ENCODE measurements at regions of chr4 and their contacts with region 1.

Region 1: GRCh38 chr4:74146581-74147129 is 11.3 kb upstream of the MTHFD2L start:
- DNase-seq: no peak
- ATAC-seq: no peak
- H3K4me3 ChIP-seq: no peak overlapping the region
- H3K27ac ChIP-seq: no peak overlapping the region
- H3K4me1 ChIP-seq: no peaks in the 10 kb centered on the region
- H3K27me3 ChIP-seq: no peaks in the 10 kb centered on the region
- CTCF ChIP-seq: no peak
- POLR2A ChIP-seq: no peak
- RAD21 ChIP-seq: no peak

Region 2: DNA sequence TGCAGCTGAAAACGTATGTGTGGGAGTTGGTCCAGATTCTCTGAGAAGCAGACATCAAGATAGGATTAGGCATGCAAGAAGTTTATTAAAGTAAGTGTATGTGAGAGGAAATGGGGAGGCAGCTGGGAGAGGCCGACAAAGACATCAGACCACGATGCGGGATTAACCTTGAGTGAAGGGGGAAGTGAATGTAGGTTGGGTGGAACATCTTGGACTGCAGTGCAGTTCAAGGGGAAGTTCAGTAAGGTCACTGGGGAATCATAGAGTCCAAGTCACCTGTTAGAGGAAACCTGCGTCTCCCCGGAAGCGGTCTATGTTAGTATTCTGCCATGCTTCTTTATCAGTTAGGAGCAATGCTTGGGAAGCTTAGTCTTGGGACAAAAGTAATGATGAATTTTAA is 384.2 kb before region 1 on chr4:
- CTCF ChIA-PET with region 1: no interaction called
- POLR2A ChIA-PET with region 1: no interaction called
- RAD21 ChIA-PET with region 1: no interaction called
- intact Hi-C with region 1: no loop called
- DNase-seq: no peak
- ATAC-seq: no peak
- H3K4me3 ChIP-seq: no peak overlapping the region
- H3K27ac ChIP-seq: no peak overlapping the region
- H3K4me1 ChIP-seq: no peaks in the 10 kb centered on the region
- H3K27me3 ChIP-seq: no peaks in the 10 kb centered on the region
- CTCF ChIP-seq: no peak
- POLR2A ChIP-seq: no peak
- RAD21 ChIP-seq: no peak

Region 3: GRCh38 chr4:74123065-74123728 is 23.5 kb before region 1 on chr4:
- CTCF ChIA-PET with region 1: no interaction called
- POLR2A ChIA-PET with region 1: no interaction called
- RAD21 ChIA-PET with region 1: no interaction called
- intact Hi-C with region 1: loop called (anchors 2 kb)
- DNase-seq: no peak
- ATAC-seq: no peak
- H3K4me3 ChIP-seq: no peak overlapping the region
- H3K27ac ChIP-seq: no peak overlapping the region
- H3K4me1 ChIP-seq: no peaks in the 10 kb centered on the region
- H3K27me3 ChIP-seq: no peaks in the 10 kb centered on the region
- CTCF ChIP-seq: no peak
- POLR2A ChIP-seq: no peak
- RAD21 ChIP-seq: no peak